AG04449 (cell line): ENCODE measurements at regions of chr3 and their contacts with region 1.

Region 1: DNA sequence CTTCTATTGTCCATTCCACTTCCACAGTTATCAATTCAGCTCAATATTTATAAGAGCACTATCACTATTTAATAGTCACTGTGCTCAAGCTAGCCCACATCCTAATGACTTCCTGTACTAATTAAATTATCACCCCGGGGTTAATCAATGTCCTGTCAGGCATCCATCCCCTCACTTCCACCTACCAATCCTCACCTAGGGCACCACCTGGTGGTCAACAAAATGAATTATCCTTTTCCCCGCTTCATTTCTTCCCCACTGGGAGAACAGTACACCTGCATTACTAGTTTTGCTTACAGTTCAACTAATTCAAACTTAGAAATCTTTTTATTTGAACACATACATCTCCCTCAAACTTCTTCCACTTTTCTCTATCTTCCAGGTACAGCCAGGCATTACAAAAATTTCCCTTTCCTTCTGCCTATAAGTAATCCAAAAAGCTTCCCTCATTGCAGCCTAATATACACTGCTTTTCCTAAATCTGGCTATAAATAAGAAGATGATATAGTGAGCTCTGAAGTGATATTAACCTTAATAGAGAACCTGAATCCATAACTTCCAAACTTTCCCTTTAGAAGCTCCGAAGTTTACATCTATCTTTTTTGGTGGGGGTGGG is 68.5 kb downstream of the TMCC1 start:
- DNase-seq: no peak
- H3K4me3 ChIP-seq: no peak overlapping the region
- CTCF ChIP-seq: peak; percentile 45

Region 2: DNA sequence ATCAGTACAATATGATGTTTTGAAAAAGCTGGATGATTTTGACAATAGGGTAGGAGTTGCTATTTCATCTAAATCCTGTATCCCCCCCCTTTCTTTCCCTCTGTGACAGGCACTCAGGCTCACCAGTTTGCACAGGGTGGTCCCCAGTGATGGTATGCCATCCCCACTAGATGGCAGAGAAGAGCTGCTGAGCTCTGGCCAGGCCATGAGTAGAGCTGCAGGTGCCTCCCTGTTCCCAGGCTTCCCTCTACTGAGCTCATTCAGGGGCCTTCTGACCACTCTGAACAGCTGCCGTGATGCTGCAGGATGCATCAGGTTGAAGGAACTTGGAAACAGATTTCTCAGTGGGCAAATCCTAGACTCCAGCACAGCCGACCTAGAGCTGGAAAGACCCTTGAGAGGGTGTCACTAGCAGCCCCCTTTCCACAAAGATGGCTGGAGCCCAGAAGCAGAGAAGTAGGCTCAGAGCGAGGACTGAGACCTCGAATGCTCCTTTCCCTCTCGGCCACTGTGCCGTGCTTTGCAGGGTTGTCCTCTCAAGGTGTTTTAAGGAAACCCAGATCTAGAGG is 441.7 kb before region 1 on chr3:
- CTCF ChIA-PET with region 1: interaction called, 16 read pairs
- POLR2A ChIA-PET with region 1: no interaction called
- DNase-seq: no peak
- H3K4me3 ChIP-seq: no peak overlapping the region
- CTCF ChIP-seq: peak; percentile 86

Region 3: DNA sequence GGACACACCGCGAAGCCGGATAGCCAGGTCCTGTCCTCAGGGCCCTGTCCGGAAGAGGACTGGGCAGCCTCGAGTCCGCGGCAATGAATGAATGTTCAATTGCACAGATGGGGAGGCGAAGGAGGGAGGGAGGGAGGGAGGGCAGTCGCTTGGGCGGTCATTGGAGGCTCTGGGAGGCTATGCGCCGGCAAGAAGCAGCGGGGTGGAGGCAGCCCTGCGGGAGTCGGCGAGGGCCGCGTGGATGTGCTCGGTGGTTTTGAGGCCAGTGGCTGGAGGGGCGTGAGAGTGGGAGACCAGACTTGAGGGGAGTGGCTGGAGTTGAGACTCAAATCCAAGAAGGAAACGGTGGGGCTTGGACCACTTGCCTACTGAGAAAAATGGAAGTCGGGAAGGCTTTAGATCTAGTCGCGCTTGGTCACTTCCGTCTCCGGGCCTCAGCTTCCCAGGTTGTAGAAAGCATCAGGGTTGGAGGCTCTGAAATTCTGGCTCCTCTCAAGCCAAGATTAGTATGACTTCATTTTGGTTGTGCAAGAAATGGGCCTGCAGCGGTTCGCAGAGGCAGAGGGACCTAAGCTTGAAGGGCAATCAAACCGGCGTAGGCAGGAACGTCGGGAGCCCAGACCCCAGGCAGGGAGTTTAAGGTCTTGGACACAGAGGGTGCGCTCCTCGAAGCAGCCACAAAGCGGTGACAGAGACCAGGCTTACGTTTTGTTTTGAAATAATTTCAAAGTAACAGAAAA is 197.4 kb before region 1 on chr3:
- CTCF ChIA-PET with region 1: interaction called, 41 read pairs
- POLR2A ChIA-PET with region 1: no interaction called
- DNase-seq: no peak
- H3K4me3 ChIP-seq: peak overlapping the region; percentile 50
- CTCF ChIP-seq: peak; percentile 75

Region 4: DNA sequence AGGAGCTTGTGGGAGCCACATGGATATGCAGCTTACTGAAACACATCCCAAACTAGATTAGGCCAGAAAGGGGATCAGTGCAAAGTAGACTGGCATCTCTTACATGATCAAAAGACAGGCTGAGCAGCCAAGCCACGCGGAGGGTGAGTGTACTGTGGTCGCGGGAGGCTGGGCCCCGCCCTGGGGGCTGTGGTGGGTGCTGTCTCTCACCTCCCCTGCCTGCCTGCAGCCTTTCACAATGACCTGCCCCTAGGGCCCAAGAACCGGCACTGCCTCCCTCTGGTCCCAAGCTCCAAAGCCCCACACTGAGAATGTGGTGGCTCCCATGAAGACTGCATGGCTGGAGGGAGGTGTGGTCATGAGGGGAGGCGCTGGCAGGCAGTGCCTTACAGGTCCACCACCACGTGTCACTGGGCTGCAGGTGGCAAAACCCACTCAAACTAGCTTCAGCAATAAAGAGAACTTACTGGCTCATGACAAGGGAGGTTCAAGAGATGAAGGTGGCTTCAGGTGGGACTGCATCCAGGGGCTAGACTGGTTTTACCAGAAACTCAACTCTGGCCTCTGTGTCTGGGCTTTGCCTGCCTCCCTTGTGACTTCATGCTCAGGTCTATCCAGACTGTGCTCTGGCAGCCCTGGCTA is 191.2 kb before region 1 on chr3:
- CTCF ChIA-PET with region 1: interaction called, 41 read pairs
- POLR2A ChIA-PET with region 1: no interaction called
- DNase-seq: no peak
- H3K4me3 ChIP-seq: no peak overlapping the region
- CTCF ChIP-seq: no peak

Region 5: GRCh38 chr3:129650256-129650872 is 174.7 kb before region 1 on chr3:
- CTCF ChIA-PET with region 1: interaction called, 215 read pairs
- POLR2A ChIA-PET with region 1: interaction called, 5 read pairs
- DNase-seq: peak; percentile 61
- H3K4me3 ChIP-seq: no peak overlapping the region
- CTCF ChIP-seq: peak; percentile 67

Region 6: GRCh38 chr3:129732200-129732876 is 92.7 kb before region 1 on chr3:
- CTCF ChIA-PET with region 1: no interaction called
- POLR2A ChIA-PET with region 1: no interaction called
- DNase-seq: no peak
- H3K4me3 ChIP-seq: no peak overlapping the region
- CTCF ChIP-seq: no peak

Region 7: DNA sequence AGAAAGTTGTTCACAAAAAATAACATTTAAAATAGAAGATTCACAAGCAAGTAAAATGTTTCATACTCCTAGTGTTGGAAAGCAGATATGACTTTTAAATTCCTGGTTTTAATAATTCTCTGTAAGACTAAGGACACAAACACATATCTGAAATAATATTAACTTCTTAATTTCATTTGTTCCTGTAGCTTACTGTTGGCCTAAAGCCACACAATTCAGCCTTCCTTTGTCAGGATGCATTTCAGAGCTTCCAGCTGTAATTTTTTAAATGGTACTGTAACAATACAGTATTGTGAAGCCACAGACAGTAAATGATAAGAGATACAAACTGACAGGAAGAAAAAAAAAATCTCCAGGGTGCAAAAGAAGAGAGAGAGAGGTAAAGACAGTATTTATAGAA is 15.7 kb before region 1 on chr3:
- CTCF ChIA-PET with region 1: interaction called, 13 read pairs
- POLR2A ChIA-PET with region 1: no interaction called
- DNase-seq: no peak
- H3K4me3 ChIP-seq: no peak overlapping the region
- CTCF ChIP-seq: no peak